ENCODE measurements at regions of chr14 and their contacts with region 1.

Region 1: GRCh38 chr14:23567192-23568020 is at the start of gene AP1G2:
- DNase-seq: peak; percentile 94
- ATAC-seq: peak; percentile 92 to 96
- H3K4me3 ChIP-seq: peak within 1 kb of the TSS; percentile 79
- H3K27ac ChIP-seq: peak within 1 kb of the TSS; percentile 76
- H3K4me1 ChIP-seq: peaks cover 28% of the 10 kb centered on the region
- H3K27me3 ChIP-seq: no peaks in the 10 kb centered on the region
- CTCF ChIP-seq: no peak
- total RNA-seq, gene AP1G2: 146 TPM

Region 2: GRCh38 chr14:23446291-23446851 is 121.0 kb before region 1 on chr14:
- intact Hi-C with region 1: no loop called
- DNase-seq: no peak
- ATAC-seq: no peak
- H3K4me3 ChIP-seq: no peak overlapping the region
- H3K27ac ChIP-seq: no peak overlapping the region
- H3K4me1 ChIP-seq: no peaks in the 10 kb centered on the region
- H3K27me3 ChIP-seq: no peaks in the 10 kb centered on the region
- CTCF ChIP-seq: no peak

Region 3: DNA sequence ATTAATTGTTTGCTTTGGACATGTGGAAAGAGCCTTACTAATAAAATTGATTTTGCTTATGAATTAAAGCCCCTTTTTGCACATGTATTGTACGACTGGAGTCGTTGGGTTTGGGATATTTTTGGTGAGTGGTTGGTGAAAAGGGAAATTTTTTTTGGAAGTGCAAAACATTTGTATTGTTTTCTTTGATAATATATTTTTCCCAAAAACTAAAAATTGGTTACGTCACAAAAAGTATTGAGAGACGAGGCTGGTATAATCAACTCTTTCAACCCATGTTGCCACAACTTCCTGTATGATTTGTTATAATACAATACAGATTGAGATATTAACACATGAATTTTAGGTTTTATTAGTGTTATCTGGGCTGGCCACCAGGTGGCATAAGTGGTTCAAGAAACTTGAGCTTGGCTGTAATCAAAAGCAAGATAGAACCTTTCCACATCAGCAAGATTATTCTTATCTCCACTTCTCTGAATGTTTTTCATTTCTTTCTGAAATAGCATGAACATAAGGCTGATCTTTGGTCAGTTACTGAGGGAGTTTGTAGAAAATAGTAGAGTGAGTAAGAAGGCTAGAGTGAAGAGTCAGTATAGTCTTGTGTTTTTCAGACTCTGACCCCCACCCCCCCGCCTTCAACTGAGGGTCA is 89.2 kb before region 1 on chr14:
- intact Hi-C with region 1: loop called (anchors 10 kb)
- DNase-seq: peak; percentile 52
- ATAC-seq: peak; percentile 65 to 74
- H3K4me3 ChIP-seq: no peak overlapping the region
- H3K27ac ChIP-seq: no peak overlapping the region
- H3K4me1 ChIP-seq: no peaks in the 10 kb centered on the region
- H3K27me3 ChIP-seq: no peaks in the 10 kb centered on the region
- CTCF ChIP-seq: peak; percentile 67

Region 4: DNA sequence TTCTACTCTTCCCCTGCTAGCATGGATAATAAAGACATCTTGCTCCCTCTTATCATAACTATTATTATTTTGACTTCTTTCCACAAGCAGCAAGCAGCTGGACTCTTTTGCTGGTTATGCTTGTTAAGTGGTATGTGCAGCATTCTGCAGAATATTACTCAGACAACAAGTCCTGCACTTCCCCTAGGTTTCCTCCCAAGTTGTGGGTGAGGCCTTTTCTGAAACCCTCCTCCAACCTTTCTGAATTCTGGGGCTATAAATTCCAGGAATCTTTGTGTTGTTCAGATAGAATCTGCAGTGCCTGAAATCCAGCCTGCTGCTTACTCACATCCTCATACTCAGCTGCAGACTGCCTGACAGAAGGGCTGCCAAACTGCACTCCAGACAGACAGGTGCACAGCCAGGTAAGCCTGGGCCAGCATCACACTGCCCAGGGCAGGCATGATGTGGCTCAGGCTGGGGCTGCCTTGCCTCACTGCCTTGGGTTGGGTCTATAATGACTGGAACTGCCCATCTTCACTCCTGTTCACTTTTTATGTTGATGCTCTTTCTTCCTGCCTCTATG is 62.5 kb after region 1 on chr14:
- intact Hi-C with region 1: no loop called
- DNase-seq: no peak
- ATAC-seq: peak in 1 of 2 donors; percentile 29
- H3K4me3 ChIP-seq: no peak overlapping the region
- H3K27ac ChIP-seq: no peak overlapping the region
- H3K4me1 ChIP-seq: peaks cover 11% of the 10 kb centered on the region
- H3K27me3 ChIP-seq: no peaks in the 10 kb centered on the region
- CTCF ChIP-seq: no peak

Measured in lower lobe of right lung (tissue), 2 donors.